KBM-7 (cell line): ENCODE measurements at regions of chr5 and their contacts with region 1.

Region 1: GRCh38 chr5:1052641-1053390 is 44.2 kb downstream of the NKD2 start:
- DNase-seq: no peak

Region 2: DNA sequence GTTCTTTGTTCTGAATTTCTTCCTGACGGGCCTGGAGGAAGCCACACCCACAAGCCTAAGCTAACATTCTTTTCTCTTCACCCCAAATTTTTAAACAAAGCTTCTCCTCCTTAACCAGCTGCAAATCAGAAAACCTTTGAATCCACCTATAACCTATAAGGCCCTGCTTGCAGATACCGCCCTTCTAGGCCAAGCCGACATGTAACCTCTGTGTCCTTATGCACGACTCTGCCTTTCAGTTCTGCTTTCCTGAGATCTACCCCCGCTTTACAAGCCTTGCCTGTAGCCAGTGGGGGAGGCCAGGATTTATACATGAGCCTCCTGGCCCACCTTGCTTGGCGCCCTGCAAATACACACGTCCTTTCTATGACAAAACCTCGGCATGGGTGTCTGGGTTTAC is 179.5 kb before region 1 on chr5:
- in situ Hi-C with region 1: no loop called
- DNase-seq: no peak

Region 3: DNA sequence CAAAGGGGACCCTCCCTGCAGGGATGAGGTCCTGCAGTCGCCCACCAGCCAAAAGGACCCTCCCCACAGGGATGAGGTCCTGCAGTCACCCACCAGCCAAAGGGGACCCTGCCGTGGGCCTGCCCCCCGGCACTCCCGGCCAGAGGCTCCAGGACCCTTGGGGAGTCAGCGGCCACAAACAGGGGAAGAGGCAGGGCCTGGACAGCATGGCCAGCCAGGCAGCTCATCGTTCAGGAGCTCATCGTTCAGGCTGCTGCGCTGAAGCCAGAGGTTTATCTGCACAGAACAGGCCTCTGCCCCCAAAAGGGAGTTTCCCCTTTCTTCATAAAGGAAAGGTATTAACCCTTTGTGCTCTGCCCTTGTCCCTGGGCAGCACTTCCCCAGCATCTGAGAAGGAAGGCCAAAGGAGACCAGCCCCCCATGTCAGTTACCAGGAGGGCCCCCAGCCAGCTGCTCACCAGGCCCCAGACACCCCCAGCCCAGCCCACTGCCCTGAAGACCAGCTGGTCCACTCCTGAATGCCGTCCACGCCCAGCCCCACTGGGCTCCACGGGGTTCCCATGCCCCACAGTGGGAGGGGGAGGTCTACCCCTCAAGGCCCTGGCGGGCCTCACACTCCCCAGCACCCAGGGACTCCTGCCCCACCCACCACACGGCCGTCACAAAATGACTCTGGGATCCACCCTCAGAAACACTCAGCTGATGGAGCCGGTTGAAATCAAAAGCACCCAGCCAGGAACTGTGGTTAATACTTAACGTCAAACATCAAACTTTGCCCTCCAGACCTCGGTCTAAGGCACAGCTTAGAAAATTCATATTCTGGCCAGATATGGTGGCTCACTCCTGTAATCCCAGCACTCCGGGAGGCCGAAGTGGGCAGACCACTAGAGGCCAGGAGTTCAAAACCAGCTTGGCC is 52.8 kb after region 1 on chr5:
- in situ Hi-C with region 1: loop called (anchors 10 kb)
- DNase-seq: peak; percentile 83